Naive thymus-derived CD8-positive, alpha-beta T cell (primary cell): ENCODE measurements at regions of chr11 and their contacts with region 1.

Region 1: DNA sequence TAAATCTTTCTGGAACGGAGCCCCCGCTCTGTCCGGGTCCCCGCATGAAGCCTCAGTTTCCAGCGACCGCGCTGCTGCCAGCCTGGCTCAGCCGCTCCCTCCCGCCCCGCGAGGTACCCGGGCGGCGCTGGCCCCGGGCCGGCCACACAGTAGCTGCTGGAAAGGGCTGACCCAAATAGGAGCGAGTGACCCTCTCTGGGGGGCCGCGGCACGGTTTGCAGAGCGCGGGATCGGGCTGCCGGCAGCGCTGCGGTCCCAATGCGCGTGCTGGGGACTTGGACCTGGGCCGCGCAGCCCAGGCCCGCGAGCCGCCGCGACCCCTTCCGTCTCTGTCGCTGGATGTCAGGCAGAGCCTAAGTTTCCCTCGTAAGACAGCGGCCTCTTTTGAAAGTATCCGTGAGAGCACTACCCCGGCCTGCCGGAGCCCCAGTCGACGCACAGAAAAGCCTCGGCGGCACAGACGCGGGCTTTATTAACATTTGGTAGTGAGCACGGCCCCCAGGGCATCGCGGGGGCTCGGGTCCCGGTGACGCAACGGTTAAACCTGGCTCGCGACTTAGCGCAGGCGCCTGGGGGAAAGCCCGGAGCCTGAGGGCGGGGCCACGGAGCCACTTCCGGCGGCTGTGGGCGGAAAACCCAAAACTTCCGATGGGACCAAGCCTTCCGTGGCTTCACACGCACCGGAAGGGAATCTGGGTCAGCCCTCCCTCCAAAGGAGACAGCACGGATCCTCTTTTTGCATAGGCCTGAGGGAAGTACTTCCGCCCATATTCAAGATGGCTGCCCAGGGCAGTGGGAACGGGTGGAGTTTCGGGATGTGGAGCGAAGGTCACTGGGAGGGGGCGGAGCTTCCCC is 14.9 kb downstream of the BAD start:
- DNase-seq: peak; percentile 93 to 98 (median 97)
- ATAC-seq: peak; percentile 76 to 77
- H3K4me3 Mint-ChIP-seq: peak overlapping the region; percentile 92 to 99 (median 96)
- H3K27ac Mint-ChIP-seq: peak overlapping the region; percentile 94 to 100 (median 98)
- H3K4me1 Mint-ChIP-seq: peaks cover 20 to 37% (median 27%) of the 10 kb centered on the region in 4 donors
- H3K27me3 Mint-ChIP-seq: no peaks in the 10 kb centered on the region

Region 2: GRCh38 chr11:64204464-64204989 is 65.1 kb before region 1 on chr11:
- POLR2A ChIA-PET with region 1: interaction called, 106 read pairs
- DNase-seq: peak; percentile 73 to 92 (median 84)
- ATAC-seq: peak; percentile 66 to 67
- H3K4me3 Mint-ChIP-seq: peak overlapping the region; percentile 48 to 88 (median 76)
- H3K27ac Mint-ChIP-seq: peak overlapping the region; percentile 82 to 95 (median 92)
- H3K4me1 Mint-ChIP-seq: peaks cover 22 to 50% (median 48%) of the 10 kb centered on the region in 4 donors
- H3K27me3 Mint-ChIP-seq: no peaks in the 10 kb centered on the region

Region 3: GRCh38 chr11:64240394-64241174 is 29.0 kb before region 1 on chr11 and contains the start of gene FKBP2:
- POLR2A ChIA-PET with region 1: interaction called, 113 read pairs
- DNase-seq: peak; percentile 96 to 99 (median 98)
- ATAC-seq: peak; percentile 73 to 75
- H3K4me3 Mint-ChIP-seq: peak within 1 kb of the TSS; percentile 86 to 96 (median 93)
- H3K27ac Mint-ChIP-seq: peak within 1 kb of the TSS; percentile 96 to 100 (median 99)
- H3K4me1 Mint-ChIP-seq: peaks cover 12 to 47% (median 40%) of the 10 kb centered on the region in 4 donors
- H3K27me3 Mint-ChIP-seq: no peaks in the 10 kb centered on the region
- polyA plus RNA-seq, gene FKBP2: 84.9 to 91.8 (median 85.5) TPM

Region 4: GRCh38 chr11:64259533-64260067 is 10.0 kb before region 1 on chr11:
- POLR2A ChIA-PET with region 1: interaction called, 13 read pairs
- DNase-seq: no peak
- ATAC-seq: no peak
- H3K4me3 Mint-ChIP-seq: peak overlapping the region in 1 of 10 donors; percentile 41
- H3K27ac Mint-ChIP-seq: peak overlapping the region in 2 of 10 donors; percentile 59 to 70
- H3K4me1 Mint-ChIP-seq: peaks cover 0 to 4% (median 0%) of the 10 kb centered on the region in 4 donors
- H3K27me3 Mint-ChIP-seq: no peaks in the 10 kb centered on the region

Region 5: GRCh38 chr11:64304316-64305072 is 34.9 kb after region 1 on chr11:
- POLR2A ChIA-PET with region 1: interaction called, 60 read pairs
- DNase-seq: peak; percentile 83 to 95 (median 90)
- ATAC-seq: peak; percentile 33 to 39
- H3K4me3 Mint-ChIP-seq: peak overlapping the region; percentile 85 to 97 (median 93)
- H3K27ac Mint-ChIP-seq: peak overlapping the region; percentile 87 to 98 (median 95)
- H3K4me1 Mint-ChIP-seq: peaks cover 22 to 47% (median 43%) of the 10 kb centered on the region in 4 donors
- H3K27me3 Mint-ChIP-seq: peaks cover 12 to 18% (median 14%) of the 10 kb centered on the region in 5 donors